Endothelial cell of umbilical vein (primary cell): ENCODE measurements at regions of chr14 and their contacts with region 1.

Region 1: GRCh38 chr14:23665375-23666192 is 29.4 kb downstream of the DHRS2 start:
- DNase-seq: peak; percentile 55
- H3K4me3 ChIP-seq: no peak overlapping the region
- H3K27ac ChIP-seq: no peak overlapping the region
- H3K4me1 ChIP-seq: no peaks in the 10 kb centered on the region
- H3K27me3 ChIP-seq: peaks cover 0 to 2% of the 10 kb centered on the region in 2 experiments
- CTCF ChIP-seq: peak; percentile 48 to 62
- POLR2A ChIP-seq: no peak

Region 2: GRCh38 chr14:23654231-23654630 is 11.4 kb before region 1 on chr14:
- CTCF ChIA-PET with region 1: interaction called, 18 read pairs
- POLR2A ChIA-PET with region 1: no interaction called
- dilution Hi-C with region 1: no loop called
- intact Hi-C with region 1: no loop called
- DNase-seq: no peak
- H3K4me3 ChIP-seq: no peak overlapping the region
- H3K27ac ChIP-seq: no peak overlapping the region
- H3K4me1 ChIP-seq: no peaks in the 10 kb centered on the region
- H3K27me3 ChIP-seq: peaks cover 0 to 2% of the 10 kb centered on the region in 2 experiments
- CTCF ChIP-seq: no peak
- POLR2A ChIP-seq: no peak

Region 3: GRCh38 chr14:23727566-23728335 is 62.2 kb after region 1 on chr14:
- CTCF ChIA-PET with region 1: interaction called, 10 read pairs
- POLR2A ChIA-PET with region 1: no interaction called
- dilution Hi-C with region 1: no loop called
- intact Hi-C with region 1: no loop called
- DNase-seq: peak; percentile 37
- H3K4me3 ChIP-seq: no peak overlapping the region
- H3K27ac ChIP-seq: no peak overlapping the region
- H3K4me1 ChIP-seq: no peaks in the 10 kb centered on the region
- H3K27me3 ChIP-seq: no peaks in the 10 kb centered on the region
- CTCF ChIP-seq: peak; percentile 27 to 32
- POLR2A ChIP-seq: no peak

Region 4: DNA sequence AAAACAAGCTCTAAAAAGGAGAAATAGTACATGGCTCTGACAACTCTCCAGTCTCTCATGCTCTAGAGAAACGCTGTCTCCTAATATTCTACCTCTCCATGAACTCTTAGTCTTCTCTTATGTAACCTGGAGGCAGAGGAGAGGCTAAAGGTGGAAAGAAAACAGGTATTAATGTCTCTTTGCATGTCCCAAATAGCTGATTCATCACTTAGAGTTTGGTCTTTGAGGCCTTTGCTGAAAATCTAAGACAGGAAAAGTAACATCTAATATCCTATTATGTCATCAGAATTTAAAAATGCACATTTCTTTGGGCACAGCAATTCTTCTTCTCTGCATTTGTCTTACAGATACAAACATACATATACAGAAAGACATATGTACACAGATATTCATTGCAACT is 97.8 kb after region 1 on chr14:
- CTCF ChIA-PET with region 1: no interaction called
- POLR2A ChIA-PET with region 1: no interaction called
- dilution Hi-C with region 1: no loop called
- intact Hi-C with region 1: no loop called
- DNase-seq: no peak
- H3K4me3 ChIP-seq: no peak overlapping the region
- H3K27ac ChIP-seq: no peak overlapping the region
- H3K4me1 ChIP-seq: no peaks in the 10 kb centered on the region
- H3K27me3 ChIP-seq: no peaks in the 10 kb centered on the region
- CTCF ChIP-seq: no peak
- POLR2A ChIP-seq: no peak

Region 5: DNA sequence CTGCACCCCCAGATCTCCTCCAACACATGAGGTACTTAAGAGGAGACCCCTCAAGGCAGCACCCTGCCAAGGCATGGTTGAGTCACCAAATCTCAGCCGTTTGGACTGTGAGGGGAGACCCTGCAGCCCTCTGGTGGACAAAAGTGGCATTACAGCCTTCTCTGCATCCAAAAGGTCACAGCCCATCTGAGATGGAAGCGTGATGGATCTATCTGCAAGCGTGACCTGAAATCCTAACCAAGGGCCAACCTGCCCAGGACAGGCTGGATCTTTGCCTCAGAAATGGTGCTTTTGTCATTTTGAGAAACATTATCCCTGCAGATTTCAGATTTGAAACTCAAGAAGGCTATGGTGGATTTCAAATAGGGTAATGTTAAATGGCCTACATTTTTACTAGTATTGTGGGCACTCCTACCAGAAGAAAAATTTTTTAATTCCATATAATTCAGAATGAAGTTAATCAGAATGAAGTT is 264.3 kb after region 1 on chr14:
- CTCF ChIA-PET with region 1: interaction called, 18 read pairs
- POLR2A ChIA-PET with region 1: no interaction called
- dilution Hi-C with region 1: no loop called
- intact Hi-C with region 1: loop called (anchors 1 kb)
- DNase-seq: peak; percentile 74
- H3K4me3 ChIP-seq: no peak overlapping the region
- H3K27ac ChIP-seq: no peak overlapping the region
- H3K4me1 ChIP-seq: no peaks in the 10 kb centered on the region
- H3K27me3 ChIP-seq: peaks cover 0 to 5% of the 10 kb centered on the region in 2 experiments
- CTCF ChIP-seq: peak; percentile 93
- POLR2A ChIP-seq: no peak

Region 6: GRCh38 chr14:23953464-23954278 is 288.1 kb after region 1 on chr14 and contains the start of gene DHRS4:
- CTCF ChIA-PET with region 1: no interaction called
- POLR2A ChIA-PET with region 1: no interaction called
- dilution Hi-C with region 1: no loop called
- intact Hi-C with region 1: loop called (anchors 2 kb)
- DNase-seq: peak; percentile 82
- H3K4me3 ChIP-seq: peak within 1 kb of the TSS; percentile 67 to 80 (median 72)
- H3K27ac ChIP-seq: peak within 1 kb of the TSS; percentile 44
- H3K4me1 ChIP-seq: no peaks in the 10 kb centered on the region
- H3K27me3 ChIP-seq: no peaks in the 10 kb centered on the region
- CTCF ChIP-seq: peak; percentile 85 to 88
- POLR2A ChIP-seq: peak; percentile 85
- total RNA-seq, gene DHRS4: 19.2 and 24.4 TPM in 2 replicates